Ascending aorta (tissue), 2 donors: ENCODE measurements at regions of chr4 and their contacts with region 1.

Region 1: GRCh38 chr4:158768555-158769174 is at the start of gene FNIP2:
- DNase-seq: peak; percentile 45 to 88
- H3K4me3 ChIP-seq: peak within 1 kb of the TSS; percentile 86 to 99
- H3K27ac ChIP-seq: peak within 1 kb of the TSS; percentile 85 to 92
- H3K4me1 ChIP-seq: peaks cover 0 to 22% of the 10 kb centered on the region in 2 donors
- H3K27me3 ChIP-seq: no peaks in the 10 kb centered on the region
- CTCF ChIP-seq: no peak
- total RNA-seq, gene FNIP2: 44.1 TPM

Region 2: GRCh38 chr4:158722917-158723793 is 45.5 kb before region 1 on chr4 and contains the start of gene PPID:
- intact Hi-C with region 1: loop called (anchors 2 kb)
- DNase-seq: peak; percentile 11 to 90
- H3K4me3 ChIP-seq: peak within 1 kb of the TSS; percentile 68 to 85
- H3K27ac ChIP-seq: peak within 1 kb of the TSS; percentile 84 to 92
- H3K4me1 ChIP-seq: peaks cover 0 to 13% of the 10 kb centered on the region in 2 donors
- H3K27me3 ChIP-seq: no peaks in the 10 kb centered on the region
- CTCF ChIP-seq: no peak
- total RNA-seq, gene PPID: 20.8 TPM

Region 3: GRCh38 chr4:158782551-158783360 is 14.1 kb after region 1 on chr4:
- intact Hi-C with region 1: no loop called
- DNase-seq: no peak
- H3K4me3 ChIP-seq: peak overlapping the region in 1 of 2 donors; percentile 4
- H3K27ac ChIP-seq: peak overlapping the region; percentile 9 to 47
- H3K4me1 ChIP-seq: peaks cover 8 to 59% of the 10 kb centered on the region in 2 donors
- H3K27me3 ChIP-seq: no peaks in the 10 kb centered on the region
- CTCF ChIP-seq: no peak

Region 4: GRCh38 chr4:158809611-158810486 is 41.2 kb after region 1 on chr4:
- intact Hi-C with region 1: loop called (anchors 2 kb)
- DNase-seq: no peak
- H3K4me3 ChIP-seq: peak overlapping the region in 1 of 2 donors; percentile 39
- H3K27ac ChIP-seq: peak overlapping the region; percentile 77 to 94
- H3K4me1 ChIP-seq: peaks cover 5 to 40% of the 10 kb centered on the region in 2 donors
- H3K27me3 ChIP-seq: no peaks in the 10 kb centered on the region
- CTCF ChIP-seq: peak in 1 of 3 experiments; percentile 3

Region 5: GRCh38 chr4:158821228-158821971 is 52.7 kb after region 1 on chr4:
- intact Hi-C with region 1: loop called (anchors 2 kb)
- DNase-seq: peak in 1 of 2 donors; percentile 36
- H3K4me3 ChIP-seq: no peak overlapping the region
- H3K27ac ChIP-seq: peak overlapping the region; percentile 76 to 87
- H3K4me1 ChIP-seq: peaks cover 25 to 64% of the 10 kb centered on the region in 2 donors
- H3K27me3 ChIP-seq: no peaks in the 10 kb centered on the region
- CTCF ChIP-seq: no peak

Region 6: DNA sequence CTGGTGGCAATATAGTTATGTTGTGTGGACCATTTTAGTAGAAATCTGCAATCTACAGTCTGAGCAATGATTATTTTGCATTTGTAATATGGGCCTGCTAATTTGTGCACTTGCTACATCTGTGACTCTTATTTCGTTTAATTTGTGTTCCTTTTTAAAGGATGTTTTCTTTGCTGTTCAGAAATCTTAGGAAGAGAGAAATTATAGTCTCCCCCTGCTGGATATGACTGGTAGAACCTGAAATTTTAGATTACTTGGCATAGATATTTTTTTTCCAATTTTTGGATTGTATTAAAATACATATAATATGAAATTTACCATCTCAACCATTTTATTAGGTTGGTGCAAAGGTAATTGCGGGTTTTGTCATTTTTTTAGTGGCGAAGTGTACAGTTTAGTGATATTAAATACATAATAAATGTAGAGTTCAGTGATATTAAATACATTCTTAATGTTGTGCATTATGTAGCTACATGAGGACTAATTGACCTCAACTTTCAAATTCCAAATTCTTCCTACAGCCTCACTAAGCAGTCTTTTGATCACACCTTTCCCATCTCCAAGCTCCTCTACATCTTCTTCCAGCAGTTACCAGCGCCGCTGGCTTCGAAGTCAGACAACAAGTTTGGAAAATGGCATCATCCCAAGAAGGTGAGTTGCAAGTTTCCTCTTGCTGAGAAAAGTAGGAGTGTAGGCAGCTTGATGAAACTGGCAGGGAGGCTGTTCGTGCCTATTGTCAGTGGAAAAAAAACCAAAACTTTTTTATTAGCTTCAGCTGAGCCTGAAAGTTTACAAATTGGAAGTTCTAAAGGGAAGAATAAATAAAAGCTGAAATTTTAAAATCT is 82.4 kb after region 1 on chr4:
- intact Hi-C with region 1: loop called (anchors 5 kb)
- DNase-seq: no peak
- H3K4me3 ChIP-seq: no peak overlapping the region
- H3K27ac ChIP-seq: peak overlapping the region in 1 of 2 donors; percentile 20
- H3K4me1 ChIP-seq: peaks cover 0 to 4% of the 10 kb centered on the region in 2 donors
- H3K27me3 ChIP-seq: no peaks in the 10 kb centered on the region
- CTCF ChIP-seq: peak; percentile 55 to 72 (median 57)